GM23248 (cell line): ENCODE measurements at regions of chr19 and their contacts with region 1.

Region 1: DNA sequence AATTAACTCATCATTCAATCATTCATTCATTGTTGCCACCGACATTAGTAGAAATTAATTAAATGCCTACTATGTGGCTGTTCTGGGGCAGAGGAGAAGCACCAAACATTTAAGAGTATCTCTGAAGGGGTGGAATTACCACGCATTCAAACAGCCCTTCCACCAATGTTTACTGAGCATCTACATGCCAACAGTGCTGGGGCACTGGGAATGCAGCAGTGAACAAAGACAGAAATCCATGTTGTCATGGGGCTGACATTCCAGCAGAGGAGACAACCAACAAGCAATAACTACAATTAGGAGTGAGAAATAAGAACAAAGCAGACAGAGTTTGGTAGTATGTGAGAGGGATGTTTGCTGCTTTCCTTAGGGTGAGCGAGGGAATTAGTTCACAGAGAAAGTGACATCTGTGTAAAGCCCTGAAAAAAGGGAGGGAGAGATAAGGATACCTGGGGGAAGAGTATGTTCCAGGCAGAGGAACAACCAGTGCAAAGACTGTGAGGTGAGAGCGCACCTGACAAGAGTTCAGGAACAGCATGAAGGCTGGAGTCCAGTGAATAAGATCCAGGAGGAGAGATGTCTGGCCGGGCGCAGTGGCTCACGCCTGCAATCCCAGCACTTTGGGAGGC is 1.3 kb upstream of the PAK4 start:
- DNase-seq: no peak
- H3K4me3 ChIP-seq: no peak overlapping the region
- H3K27ac ChIP-seq: no peak overlapping the region
- H3K4me1 ChIP-seq: peaks cover 6% of the 10 kb centered on the region
- H3K27me3 ChIP-seq: no peaks in the 10 kb centered on the region

Region 2: DNA sequence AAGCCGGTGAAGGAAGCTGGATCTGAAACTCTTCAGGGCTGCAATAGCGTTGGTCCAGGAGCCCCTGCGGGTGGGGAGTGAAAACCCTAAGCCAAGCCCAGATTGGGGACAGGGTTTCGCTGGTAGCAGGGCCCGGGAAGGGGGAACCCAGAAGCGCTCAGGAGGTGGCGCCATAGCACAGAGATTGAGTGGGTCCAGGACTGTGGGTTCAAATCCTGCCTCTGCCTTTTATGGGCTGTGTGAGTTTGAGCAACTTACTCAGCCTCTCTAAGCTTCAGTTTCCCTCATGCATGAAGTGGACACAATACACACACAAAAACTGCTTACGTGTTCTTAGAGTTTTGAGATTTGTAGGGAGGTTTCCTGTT is 88.1 kb after region 1 on chr19:
- in situ Hi-C with region 1: no loop called
- DNase-seq: peak; percentile 24
- H3K4me3 ChIP-seq: no peak overlapping the region
- H3K27ac ChIP-seq: no peak overlapping the region
- H3K4me1 ChIP-seq: no peaks in the 10 kb centered on the region
- H3K27me3 ChIP-seq: peaks cover 24% of the 10 kb centered on the region

Region 3: GRCh38 chr19:39332293-39332692 is 208.0 kb after region 1 on chr19:
- in situ Hi-C with region 1: loop called (anchors 5 kb)
- DNase-seq: no peak
- H3K4me3 ChIP-seq: no peak overlapping the region
- H3K27ac ChIP-seq: no peak overlapping the region
- H3K4me1 ChIP-seq: no peaks in the 10 kb centered on the region
- H3K27me3 ChIP-seq: no peaks in the 10 kb centered on the region

Region 4: GRCh38 chr19:39557441-39558151 is 433.3 kb after region 1 on chr19:
- in situ Hi-C with region 1: no loop called
- DNase-seq: no peak
- H3K4me3 ChIP-seq: no peak overlapping the region
- H3K27ac ChIP-seq: no peak overlapping the region
- H3K4me1 ChIP-seq: no peaks in the 10 kb centered on the region
- H3K27me3 ChIP-seq: peaks cover 27% of the 10 kb centered on the region